Activated naive CD4-positive, alpha-beta T cell treated with anti-CD3 and anti-CD28 coated beads for 36 hours (primary cell): ENCODE measurements at regions of chr10 and their contacts with region 1.

Region 1: DNA sequence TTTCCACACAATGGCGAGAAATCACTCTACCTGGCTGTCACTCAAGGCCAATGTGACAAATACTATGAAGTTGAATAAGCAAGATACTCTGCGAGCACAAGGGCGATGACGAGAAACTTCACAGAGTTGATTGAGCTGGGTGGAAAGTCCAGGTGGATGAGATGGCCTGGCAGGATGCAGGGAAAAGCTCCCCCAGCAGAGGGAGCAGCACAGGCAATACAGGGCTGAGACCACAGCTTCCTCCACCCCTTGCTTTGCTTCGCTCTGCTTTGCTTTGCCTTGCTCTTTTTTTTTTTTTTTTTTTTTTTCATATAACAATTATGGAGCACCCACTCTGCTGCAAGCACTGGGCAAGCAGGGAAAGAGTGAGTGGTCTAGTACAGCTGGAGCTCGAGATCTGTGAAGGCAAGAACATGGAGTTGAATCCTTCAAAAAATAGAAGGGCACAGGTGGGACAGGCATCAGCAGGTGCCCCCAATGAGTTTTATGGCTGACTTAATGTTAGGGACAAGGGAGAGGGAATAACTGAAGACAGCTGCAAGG is 88.3 kb downstream of the CABCOCO1 start:
- DNase-seq: peak; percentile 85
- H3K4me3 Mint-ChIP-seq: no peak overlapping the region
- H3K27ac Mint-ChIP-seq: peak overlapping the region; percentile 14
- H3K4me1 Mint-ChIP-seq: peaks cover 38% of the 10 kb centered on the region
- H3K27me3 Mint-ChIP-seq: no peaks in the 10 kb centered on the region

Region 2: DNA sequence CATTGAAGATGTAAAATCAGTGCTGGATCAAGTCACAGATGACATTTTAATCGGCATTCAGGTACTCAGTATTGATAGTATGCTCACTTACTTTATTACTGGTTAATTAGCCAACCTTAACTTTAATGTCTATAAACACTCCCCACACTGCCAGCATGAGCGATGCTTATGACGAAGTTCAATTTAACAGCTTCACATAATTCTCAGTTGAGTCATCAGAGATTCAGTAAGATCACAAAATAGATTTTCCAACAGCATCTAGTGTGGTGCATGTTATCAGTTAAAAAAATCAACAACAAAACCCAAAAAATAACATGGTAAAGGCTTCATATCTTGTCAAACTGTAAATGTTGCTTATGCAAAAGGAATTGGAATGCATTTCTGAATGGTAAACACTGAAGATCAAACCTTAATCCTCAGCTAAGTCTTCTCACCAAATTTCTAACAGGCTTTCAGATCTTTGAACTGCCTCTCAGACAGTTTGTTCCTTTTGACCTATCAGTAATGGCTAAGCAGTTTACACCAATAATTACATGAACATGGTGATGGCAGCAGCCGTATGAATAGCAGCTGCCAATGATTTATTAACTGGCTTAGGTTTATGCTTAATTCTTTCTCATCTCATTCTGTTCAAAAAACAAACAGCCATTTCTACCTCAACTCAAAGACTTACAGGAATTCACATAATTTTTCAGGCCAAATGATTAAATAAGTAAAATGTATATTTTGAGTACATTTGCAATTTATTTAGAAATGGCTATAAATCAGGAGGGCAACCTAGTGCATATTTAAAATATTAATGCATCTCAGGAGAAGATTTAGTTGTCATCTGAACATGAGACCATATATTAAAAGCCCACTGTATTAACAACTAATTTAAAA is 10.2 kb after region 1 on chr10:
- CTCF ChIA-PET with region 1: interaction called, 30 read pairs
- intact Hi-C with region 1: loop called (anchors 1 kb)
- DNase-seq: no peak
- H3K4me3 Mint-ChIP-seq: no peak overlapping the region
- H3K27ac Mint-ChIP-seq: no peak overlapping the region
- H3K4me1 Mint-ChIP-seq: peaks cover 17% of the 10 kb centered on the region
- H3K27me3 Mint-ChIP-seq: no peaks in the 10 kb centered on the region

Region 3: DNA sequence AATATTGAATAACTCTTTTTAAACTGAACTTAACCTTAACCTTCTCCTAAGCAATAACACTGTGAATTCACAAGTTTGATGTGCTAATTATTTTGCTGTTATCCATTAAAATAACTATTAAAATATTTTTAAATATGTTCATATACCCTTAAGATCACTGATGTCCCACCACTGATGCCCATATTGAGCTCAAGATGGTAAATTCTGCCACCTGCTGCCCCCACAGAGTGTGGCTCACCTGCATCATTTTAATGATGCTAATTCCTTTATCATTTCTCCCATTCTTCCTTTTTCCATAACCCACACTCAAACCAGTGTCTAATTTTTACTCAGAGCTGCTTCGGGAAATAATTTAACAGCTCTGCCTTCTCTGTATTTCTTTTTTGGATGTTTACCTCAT is 68.2 kb after region 1 on chr10:
- CTCF ChIA-PET with region 1: interaction called, 4 read pairs
- intact Hi-C with region 1: loop called (anchors 1 kb)
- DNase-seq: no peak
- H3K4me3 Mint-ChIP-seq: no peak overlapping the region
- H3K27ac Mint-ChIP-seq: no peak overlapping the region
- H3K4me1 Mint-ChIP-seq: no peaks in the 10 kb centered on the region
- H3K27me3 Mint-ChIP-seq: no peaks in the 10 kb centered on the region

Region 4: GRCh38 chr10:61869774-61870525 is 119.0 kb after region 1 on chr10:
- CTCF ChIA-PET with region 1: interaction called, 14 read pairs
- intact Hi-C with region 1: loop called (anchors 1 kb)
- DNase-seq: no peak
- H3K4me3 Mint-ChIP-seq: no peak overlapping the region
- H3K27ac Mint-ChIP-seq: no peak overlapping the region
- H3K4me1 Mint-ChIP-seq: peaks cover 26% of the 10 kb centered on the region
- H3K27me3 Mint-ChIP-seq: no peaks in the 10 kb centered on the region

Region 5: DNA sequence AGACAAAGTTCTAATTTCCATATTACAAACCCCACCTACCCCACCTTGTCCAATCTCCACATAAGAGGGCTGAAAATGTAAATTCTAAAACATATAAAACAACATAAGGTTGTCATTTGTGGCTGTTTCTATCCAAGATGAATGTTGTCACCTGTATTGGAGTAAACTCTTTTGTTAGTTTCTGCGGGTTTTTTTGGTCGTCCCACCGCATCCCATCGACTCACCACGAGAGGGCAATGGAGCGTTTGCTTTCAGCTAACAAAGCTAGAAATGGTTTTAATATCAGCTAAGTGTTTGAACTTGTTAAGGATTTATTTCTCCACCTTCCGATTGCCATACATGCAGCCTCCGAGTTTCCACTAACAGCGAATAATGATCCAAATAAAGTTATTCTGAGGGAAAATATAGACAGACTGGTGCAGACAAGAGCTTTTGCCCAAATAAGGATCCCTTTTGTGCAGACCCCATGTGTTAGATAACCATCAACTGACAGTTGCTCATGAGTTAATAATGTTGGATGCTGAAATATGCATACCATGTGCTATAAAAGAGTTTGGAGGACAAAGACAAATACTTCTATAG is 287.7 kb after region 1 on chr10:
- CTCF ChIA-PET with region 1: interaction called, 3 read pairs
- intact Hi-C with region 1: loop called (anchors 10 kb)
- DNase-seq: peak; percentile 90
- H3K4me3 Mint-ChIP-seq: peak overlapping the region; percentile 14
- H3K27ac Mint-ChIP-seq: peak overlapping the region; percentile 91
- H3K4me1 Mint-ChIP-seq: peaks cover 85% of the 10 kb centered on the region
- H3K27me3 Mint-ChIP-seq: no peaks in the 10 kb centered on the region